ENCODE measurements at regions of chr20 and their contacts with region 1.

Region 1: GRCh38 chr20:3820048-3820900 is at the start of gene AP5S1:
- H3K4me3 Mint-ChIP-seq: peak within 1 kb of the TSS; percentile 89
- H3K27ac Mint-ChIP-seq: peak within 1 kb of the TSS; percentile 99
- H3K4me1 Mint-ChIP-seq: peaks cover 36% of the 10 kb centered on the region
- H3K27me3 Mint-ChIP-seq: peaks cover under 1% of the 10 kb centered on the region

Region 2: DNA sequence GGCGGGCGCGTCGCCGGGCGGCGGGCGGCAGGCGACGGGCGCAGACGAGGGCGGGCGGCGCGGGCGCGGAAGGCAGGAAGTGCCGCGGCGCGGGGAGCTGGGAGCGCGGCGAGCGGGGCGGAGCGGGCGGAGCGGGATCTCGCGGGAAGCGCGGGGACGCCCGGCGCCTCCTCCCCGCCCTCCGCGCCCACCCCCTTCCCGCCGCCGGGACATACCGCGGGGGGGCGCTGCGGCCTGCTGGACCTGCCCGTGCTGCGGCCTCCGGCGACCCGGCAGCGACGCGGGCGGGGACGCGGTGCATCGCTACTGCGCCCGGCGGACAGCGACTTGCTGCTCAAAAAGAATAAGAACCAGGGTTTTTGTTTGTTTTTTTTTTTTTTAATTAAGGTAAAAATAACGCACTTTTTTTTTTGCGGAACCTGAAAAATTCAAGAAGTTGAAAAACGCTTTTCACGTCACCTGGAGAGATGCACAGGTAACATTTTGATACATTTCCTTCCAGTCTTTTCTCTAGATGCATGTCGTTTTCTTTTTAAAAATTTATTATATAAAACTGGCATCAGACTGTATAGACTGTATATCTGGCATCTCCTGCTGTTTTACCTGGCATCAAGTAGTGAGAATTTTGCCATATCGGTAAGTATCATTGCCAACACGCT is 33.5 kb before region 1 on chr20 and contains the start of gene CENPB:
- intact Hi-C with region 1: loop called (anchors 1 kb)
- H3K4me3 Mint-ChIP-seq: peak within 1 kb of the TSS; percentile 81
- H3K27ac Mint-ChIP-seq: peak within 1 kb of the TSS; percentile 78
- H3K4me1 Mint-ChIP-seq: peaks cover 48% of the 10 kb centered on the region
- H3K27me3 Mint-ChIP-seq: peaks cover 3% of the 10 kb centered on the region

Region 3: DNA sequence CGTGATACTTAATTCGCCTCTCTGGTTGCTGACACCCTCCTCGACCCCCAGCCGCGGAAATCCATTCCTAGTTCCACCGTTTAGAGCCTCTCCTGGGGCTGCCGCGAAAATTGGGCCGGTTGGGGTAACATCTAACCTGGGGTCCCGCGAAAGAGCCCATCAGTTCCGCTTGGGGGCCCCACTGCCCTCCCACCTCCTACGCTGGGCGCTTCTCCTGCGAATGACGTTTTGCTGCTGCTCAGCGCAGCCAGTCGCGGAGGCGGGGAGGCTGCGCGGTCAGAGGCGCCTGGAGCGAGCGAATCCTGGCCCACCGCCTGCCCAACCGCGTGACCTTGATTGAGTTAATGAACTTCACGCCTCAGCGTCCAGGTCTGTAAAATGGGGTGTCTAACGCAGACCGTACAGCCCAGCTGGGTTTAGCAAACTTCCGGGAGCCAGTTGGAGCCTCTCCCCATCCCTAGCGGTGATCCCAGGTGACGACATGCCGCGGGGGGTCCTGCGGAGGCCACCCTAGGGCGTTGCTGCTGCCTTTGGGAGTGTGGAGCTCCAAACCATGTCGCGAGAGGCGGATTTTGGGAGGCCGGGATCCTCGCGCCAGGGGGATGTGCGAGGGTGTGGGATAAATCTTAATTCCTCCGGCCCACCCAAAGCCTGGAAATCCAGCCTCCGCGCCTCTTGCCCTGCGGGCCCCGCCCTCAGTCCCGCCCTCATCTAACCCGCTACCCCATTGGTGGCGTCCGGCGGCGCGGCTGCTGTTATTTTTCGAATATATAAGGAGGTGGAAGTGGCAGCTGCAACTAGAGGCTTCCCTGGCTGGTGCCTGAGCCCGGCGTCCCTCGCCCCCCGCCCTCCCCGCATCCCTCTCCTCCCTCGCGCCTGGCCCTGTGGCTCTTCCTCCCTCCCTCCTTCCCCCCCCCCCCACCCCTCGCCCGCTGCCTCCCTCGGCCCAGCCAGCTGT is 24.5 kb before region 1 on chr20 and contains the start of gene CDC25B:
- intact Hi-C with region 1: loop called (anchors 2 kb)
- H3K4me3 Mint-ChIP-seq: peak within 1 kb of the TSS; percentile 81
- H3K27ac Mint-ChIP-seq: peak within 1 kb of the TSS; percentile 93
- H3K4me1 Mint-ChIP-seq: peaks cover 46% of the 10 kb centered on the region
- H3K27me3 Mint-ChIP-seq: no peaks in the 10 kb centered on the region

Region 4: DNA sequence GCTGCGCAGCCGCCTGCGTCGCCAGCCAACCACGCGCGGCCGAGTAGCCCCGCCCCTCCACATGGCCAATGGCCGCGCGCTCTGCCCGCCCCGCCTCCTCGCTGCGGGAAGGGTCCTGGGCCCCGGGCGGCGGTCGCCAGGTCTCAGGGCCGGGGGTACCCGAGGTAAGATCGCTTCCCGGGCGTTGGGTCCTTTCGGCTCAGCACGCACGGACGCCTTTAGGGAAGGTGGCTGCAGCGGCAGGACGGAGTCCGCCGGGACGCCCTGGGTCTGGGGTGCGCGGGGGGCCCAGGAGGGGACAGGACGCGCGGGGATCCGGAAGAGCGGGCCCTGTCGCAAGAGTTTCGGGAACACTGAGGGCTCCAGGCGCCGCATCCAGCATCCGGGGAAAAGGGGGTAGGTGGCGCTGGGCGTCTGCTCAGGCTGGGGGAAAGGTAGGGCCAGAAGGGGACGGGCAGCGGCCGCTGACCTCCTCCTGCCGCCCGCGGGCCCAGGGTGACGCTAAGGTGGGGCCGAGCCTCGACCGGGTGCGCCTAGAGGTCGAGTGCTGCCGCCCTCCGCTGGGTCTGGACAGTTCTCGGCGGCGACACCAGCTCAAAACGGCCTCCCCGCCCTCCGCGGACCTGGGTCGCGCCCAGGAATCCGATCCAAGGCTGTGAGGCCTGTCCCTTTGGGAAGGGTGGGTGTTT is 26.6 kb after region 1 on chr20 and contains the start of gene MAVS:
- intact Hi-C with region 1: loop called (anchors 2 kb)
- H3K4me3 Mint-ChIP-seq: peak within 1 kb of the TSS; percentile 93
- H3K27ac Mint-ChIP-seq: peak within 1 kb of the TSS; percentile 95
- H3K4me1 Mint-ChIP-seq: peaks cover 32% of the 10 kb centered on the region
- H3K27me3 Mint-ChIP-seq: no peaks in the 10 kb centered on the region